ENCODE measurements at regions of chr2 and their contacts with region 1.

Region 1: DNA sequence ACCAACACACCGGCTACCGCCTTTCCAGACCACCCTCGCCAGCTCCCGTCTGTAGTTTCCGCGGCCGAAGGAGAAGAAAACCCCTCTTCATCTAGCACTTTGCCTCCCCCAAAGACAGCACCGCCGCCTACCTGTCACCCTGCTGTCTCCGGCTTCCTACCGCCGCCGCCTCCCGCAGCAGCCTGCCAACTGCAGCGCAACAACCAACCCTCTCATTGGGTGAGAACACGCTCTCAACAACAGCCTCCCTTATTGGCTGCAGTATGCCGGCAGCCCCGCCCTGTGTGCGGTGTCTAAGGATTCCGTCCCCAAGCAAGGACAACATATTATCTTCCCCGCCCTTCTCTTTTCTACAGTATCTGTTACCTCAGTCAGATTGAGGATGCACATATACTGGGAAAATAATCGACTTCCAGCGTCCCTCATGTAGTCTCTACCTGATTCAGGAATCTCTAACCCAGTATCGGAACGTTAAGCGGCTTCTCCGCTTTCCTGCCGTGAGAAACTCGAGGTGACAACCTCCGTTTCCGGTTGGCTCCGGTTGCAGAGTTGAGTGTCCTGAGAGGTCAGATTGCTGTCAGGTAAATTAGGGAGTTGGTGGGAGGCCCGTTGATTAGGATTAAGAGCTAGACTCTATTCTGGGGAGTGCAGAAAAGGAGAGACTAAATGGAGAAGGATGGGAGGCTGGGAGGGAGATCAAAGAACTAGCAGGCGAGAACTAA is at the starts of genes HYCC2 and NDUFB3:
- DNase-seq: peak; percentile 94 to 98 (median 96)
- ATAC-seq: peak; percentile 92
- H3K4me3 ChIP-seq: peak within 1 kb of the TSS; percentile 83
- H3K27ac ChIP-seq: peak within 1 kb of the TSS; percentile 99
- H3K4me1 ChIP-seq: peaks cover 4 to 5% of the 10 kb centered on the region in 2 experiments; a peak in 3 of 5 replicates
- H3K27me3 ChIP-seq: no peaks in the 10 kb centered on the region
- CTCF ChIP-seq: peak; percentile 38 to 47 (median 42); a peak in 4 of 6 replicates
- EP300 ChIP-seq: 0 out of 2 replicates have a peak, but pooled peaks have one; percentile 17
- POLR2A ChIP-seq: peak; percentile 84
- RAD21 ChIP-seq: 0 out of 4 replicates have a peak, but pooled peaks of 1 of the 2 experiments have one; percentile 2
- polyA plus RNA-seq, gene HYCC2: 7.5 to 9.8 TPM
- polyA plus RNA-seq, gene NDUFB3: 679 to 786 TPM

Region 2: DNA sequence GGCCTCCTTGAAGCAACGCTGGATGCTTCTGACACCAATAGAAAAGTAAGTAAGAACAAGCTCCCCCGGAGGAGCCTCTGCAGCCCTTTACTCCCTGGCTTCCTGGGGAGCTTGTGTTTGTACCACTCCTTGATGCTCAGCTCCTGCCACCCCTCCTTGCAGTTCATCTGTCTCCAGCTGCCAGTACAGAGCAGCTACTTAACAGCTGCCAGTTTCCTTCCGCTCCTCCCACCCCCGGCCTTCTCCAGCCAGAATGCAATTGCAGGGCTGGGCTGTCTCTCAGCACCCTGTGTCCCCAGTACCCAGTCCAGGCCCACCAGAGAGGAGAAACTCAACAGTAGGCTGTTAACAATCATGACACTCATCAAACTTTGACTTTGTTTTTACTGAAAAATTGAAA is 376.4 kb before region 1 on chr2:
- CTCF ChIA-PET with region 1: no interaction called
- POLR2A ChIA-PET with region 1: no interaction called
- in situ Hi-C with region 1: no loop called
- intact Hi-C with region 1: no loop called
- DNase-seq: no peak
- ATAC-seq: no peak
- H3K4me3 ChIP-seq: no peak overlapping the region
- H3K27ac ChIP-seq: no peak overlapping the region
- H3K4me1 ChIP-seq: no peaks in the 10 kb centered on the region
- H3K27me3 ChIP-seq: peaks cover 0 to 19% of the 10 kb centered on the region in 2 experiments; a peak in 3 of 5 replicates
- CTCF ChIP-seq: no peak
- EP300 ChIP-seq: no peak
- POLR2A ChIP-seq: no peak
- RAD21 ChIP-seq: no peak

Region 3: DNA sequence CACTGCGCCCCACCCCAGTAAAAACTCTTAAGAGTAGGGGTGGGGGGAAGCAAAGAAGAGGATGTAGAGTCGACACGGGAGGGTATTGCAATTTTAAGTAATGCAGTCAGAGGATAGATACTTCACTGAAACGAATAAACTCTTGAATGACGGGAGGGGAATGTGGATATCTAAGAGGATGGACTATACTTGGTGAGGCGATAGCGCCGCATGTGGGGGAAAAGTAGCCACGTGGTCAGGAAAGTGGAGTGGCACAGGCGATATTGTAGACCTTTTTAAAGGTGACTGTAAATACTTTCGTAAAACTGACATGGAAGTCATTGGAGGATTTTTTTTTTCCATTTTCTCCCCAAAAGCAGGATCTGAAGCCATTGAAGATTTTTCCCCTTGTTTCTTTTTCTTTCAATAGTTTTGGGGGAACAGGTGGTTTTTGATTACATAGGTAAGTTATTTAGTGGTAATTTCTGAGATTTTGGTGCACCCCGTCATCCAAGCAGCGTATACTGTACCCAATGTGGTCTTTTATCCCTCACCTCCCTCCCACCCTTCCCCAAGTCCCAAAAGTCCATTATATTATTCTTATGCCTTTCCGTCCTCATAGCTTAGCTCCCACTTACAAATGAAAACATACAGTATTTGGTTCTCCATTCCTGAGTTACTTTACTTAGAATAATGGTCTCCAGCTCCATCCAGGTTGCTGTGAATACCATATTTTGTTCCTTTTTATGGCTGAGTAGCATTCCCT is 221.0 kb before region 1 on chr2:
- CTCF ChIA-PET with region 1: no interaction called
- POLR2A ChIA-PET with region 1: no interaction called
- in situ Hi-C with region 1: no loop called
- intact Hi-C with region 1: no loop called
- DNase-seq: peak in 3 of 4 experiments; percentile 12 to 61 (median 36)
- ATAC-seq: peak; percentile 82
- H3K4me3 ChIP-seq: no peak overlapping the region
- H3K27ac ChIP-seq: no peak overlapping the region
- H3K4me1 ChIP-seq: no peaks in the 10 kb centered on the region; a peak in 1 of 5 replicates
- H3K27me3 ChIP-seq: no peaks in the 10 kb centered on the region
- CTCF ChIP-seq: peak; percentile 36 to 46 (median 43); a peak in 2 of 6 replicates
- EP300 ChIP-seq: no peak
- POLR2A ChIP-seq: no peak
- RAD21 ChIP-seq: peak in 1 of 2 experiments; percentile 35; a peak in 1 of 4 replicates

Region 4: DNA sequence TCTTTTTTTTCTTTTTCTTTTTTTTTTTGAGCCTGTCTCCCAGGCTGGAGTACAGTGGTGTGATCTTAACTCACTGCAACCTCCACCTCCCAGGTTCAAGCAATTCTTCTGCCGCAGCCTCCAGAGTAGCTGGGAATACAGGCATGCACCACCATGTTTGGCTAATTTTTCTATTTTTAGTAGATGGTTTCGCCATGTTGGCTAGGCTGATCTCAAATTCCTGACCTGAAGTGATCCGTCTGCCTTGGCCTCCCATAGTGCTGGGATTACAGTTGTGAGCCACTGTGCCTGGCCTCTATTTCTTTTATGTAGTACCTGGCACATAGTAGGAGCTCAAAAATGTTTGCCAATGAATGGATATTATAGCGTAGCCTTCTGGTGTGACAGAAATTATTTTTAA is 37.5 kb after region 1 on chr2:
- CTCF ChIA-PET with region 1: no interaction called
- POLR2A ChIA-PET with region 1: no interaction called
- in situ Hi-C with region 1: no loop called
- intact Hi-C with region 1: no loop called
- DNase-seq: no peak
- ATAC-seq: no peak
- H3K4me3 ChIP-seq: no peak overlapping the region
- H3K27ac ChIP-seq: no peak overlapping the region
- H3K4me1 ChIP-seq: peaks cover 8 to 9% of the 10 kb centered on the region in 2 experiments; a peak in 3 of 5 replicates
- H3K27me3 ChIP-seq: no peaks in the 10 kb centered on the region
- CTCF ChIP-seq: no peak
- EP300 ChIP-seq: no peak
- POLR2A ChIP-seq: no peak
- RAD21 ChIP-seq: no peak

Region 5: GRCh38 chr2:201158111-201158929 is 86.7 kb after region 1 on chr2:
- CTCF ChIA-PET with region 1: no interaction called
- POLR2A ChIA-PET with region 1: interaction called, 5 read pairs
- in situ Hi-C with region 1: no loop called
- intact Hi-C with region 1: loop called (anchors 1 kb)
- DNase-seq: peak; percentile 42 to 82 (median 60)
- ATAC-seq: peak; percentile 94
- H3K4me3 ChIP-seq: no peak overlapping the region
- H3K27ac ChIP-seq: peak overlapping the region; percentile 66
- H3K4me1 ChIP-seq: peaks cover 7 to 17% of the 10 kb centered on the region in 2 experiments; a peak in 4 of 5 replicates
- H3K27me3 ChIP-seq: no peaks in the 10 kb centered on the region
- CTCF ChIP-seq: peak; percentile 61 to 84 (median 75)
- EP300 ChIP-seq: peak; percentile 74
- POLR2A ChIP-seq: no peak
- RAD21 ChIP-seq: peak; percentile 86 to 90